Mammary epithelial cell (primary cell): ENCODE measurements at regions of chr3 and their contacts with region 1.

Region 1: GRCh38 chr3:116339441-116340028 is 105.8 kb downstream of the LSAMP start:
- DNase-seq: no peak
- H3K4me3 ChIP-seq: no peak overlapping the region
- H3K27ac ChIP-seq: no peak overlapping the region
- H3K4me1 ChIP-seq: no peaks in the 10 kb centered on the region
- H3K27me3 ChIP-seq: no peaks in the 10 kb centered on the region
- CTCF ChIP-seq: no peak

Region 2: DNA sequence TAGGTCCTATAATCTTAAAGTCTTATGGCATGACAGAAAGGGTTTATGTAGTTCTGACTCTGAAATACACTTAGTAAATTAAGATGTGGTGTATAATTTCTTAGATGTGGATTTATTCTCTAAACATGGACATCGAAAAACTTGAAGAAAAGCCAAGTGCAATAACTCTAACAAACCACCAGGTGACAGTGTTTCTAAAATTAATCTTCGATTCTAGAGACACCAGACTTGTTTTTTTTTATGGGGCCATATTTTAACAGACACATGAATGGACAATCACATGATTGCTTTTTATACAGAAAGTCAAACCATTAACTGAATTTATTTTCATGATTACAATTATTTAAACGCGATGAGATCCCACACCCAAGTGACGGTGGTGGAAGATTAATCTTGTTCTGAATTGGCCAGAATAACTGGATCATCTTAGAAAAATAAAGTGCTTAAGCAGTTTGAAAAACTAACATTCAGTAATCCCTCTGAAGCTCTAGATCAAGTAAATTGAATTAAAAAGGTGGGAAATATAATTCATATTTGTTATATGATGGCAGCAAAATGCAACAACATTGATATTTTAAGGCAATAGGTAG is 199.3 kb before region 1 on chr3:
- CTCF ChIA-PET with region 1: no interaction called
- dilution Hi-C with region 1: no loop called
- in situ Hi-C with region 1: no loop called
- intact Hi-C with region 1: loop called (anchors 2 kb)
- DNase-seq: peak; percentile 15
- H3K4me3 ChIP-seq: no peak overlapping the region
- H3K27ac ChIP-seq: no peak overlapping the region
- H3K4me1 ChIP-seq: no peaks in the 10 kb centered on the region
- H3K27me3 ChIP-seq: no peaks in the 10 kb centered on the region
- CTCF ChIP-seq: peak; percentile 71 to 86